ENCODE measurements at regions of chr1 and their contacts with region 1.

Region 1: GRCh38 chr1:162847839-162848453 is 13.0 kb downstream of the CCDC190 start:
- DNase-seq: peak; percentile 85
- H3K4me3 Mint-ChIP-seq: no peak overlapping the region
- H3K27ac Mint-ChIP-seq: no peak overlapping the region
- H3K4me1 Mint-ChIP-seq: no peaks in the 10 kb centered on the region
- H3K27me3 Mint-ChIP-seq: peaks cover 17% of the 10 kb centered on the region

Region 2: DNA sequence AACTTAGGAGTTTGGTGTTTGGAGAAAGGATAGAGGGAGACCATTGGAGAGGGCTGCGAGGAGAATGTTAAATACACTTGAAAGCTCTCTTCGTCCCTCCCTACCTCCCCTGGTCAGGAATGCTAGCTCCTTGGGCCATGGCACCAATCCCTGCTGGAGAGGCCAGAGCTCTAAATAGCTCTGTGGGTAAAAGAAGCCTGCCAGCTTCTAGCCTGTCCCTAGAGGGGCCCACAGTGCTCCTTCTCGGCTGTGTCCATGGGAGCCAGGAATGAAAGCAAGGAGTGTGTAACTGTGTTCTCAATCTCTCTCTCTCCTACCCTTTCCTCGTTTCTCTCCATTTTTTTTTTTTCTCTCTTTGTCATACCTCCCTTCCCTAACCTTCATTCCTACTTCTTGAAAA is 13.2 kb after region 1 on chr1 and contains the start of gene CCDC190:
- CTCF ChIA-PET with region 1: interaction called, 12 read pairs
- DNase-seq: no peak
- H3K4me3 Mint-ChIP-seq: no peak within 1 kb of the TSS
- H3K27ac Mint-ChIP-seq: no peak within 1 kb of the TSS
- H3K4me1 Mint-ChIP-seq: no peaks in the 10 kb centered on the region
- H3K27me3 Mint-ChIP-seq: peaks cover 23% of the 10 kb centered on the region

Measured in activated naive CD4-positive, alpha-beta T cell treated with anti-CD3 and anti-CD28 coated beads, Interleukin-2, amount 10 ng/mL, durations not matched to agents 7 days and 5 days (primary cell).